ENCODE measurements at regions of chr22 and their contacts with region 1.

Region 1: GRCh38 chr22:36123673-36124630 is 36.6 kb downstream of the APOL3 start:
- DNase-seq: peak; percentile 94 to 99 (median 97)
- H3K4me3 ChIP-seq: peak overlapping the region; percentile 40 to 66 (median 60)
- H3K27ac ChIP-seq: peak overlapping the region; percentile 83 to 88
- H3K4me1 ChIP-seq: no peaks in the 10 kb centered on the region
- H3K27me3 ChIP-seq: no peaks in the 10 kb centered on the region
- CTCF ChIP-seq: peak; percentile 100

Region 2: GRCh38 chr22:35627264-35628041 is 496.5 kb before region 1 on chr22:
- intact Hi-C with region 1: loop called (anchors 10 kb)
- DNase-seq: peak; percentile 84 to 93 (median 89)
- H3K4me3 ChIP-seq: peak overlapping the region; percentile 71 to 95 (median 75)
- H3K27ac ChIP-seq: peak overlapping the region; percentile 77 to 90
- H3K4me1 ChIP-seq: peaks cover 0 to 4% (median 0%) of the 10 kb centered on the region in 3 donors
- H3K27me3 ChIP-seq: no peaks in the 10 kb centered on the region
- CTCF ChIP-seq: peak; percentile 82

Region 3: GRCh38 chr22:35930933-35931332 is 193.0 kb before region 1 on chr22:
- intact Hi-C with region 1: loop called (anchors 10 kb)
- DNase-seq: peak in 3 of 5 donors; percentile 29 to 91 (median 85)
- H3K4me3 ChIP-seq: no peak overlapping the region
- H3K27ac ChIP-seq: no peak overlapping the region
- H3K4me1 ChIP-seq: no peaks in the 10 kb centered on the region
- H3K27me3 ChIP-seq: no peaks in the 10 kb centered on the region
- CTCF ChIP-seq: peak; percentile 74